K562 (cell line): ENCODE measurements at regions of chr18 and their contacts with region 1.

Region 1: GRCh38 chr18:58776084-58776483 is 88.6 kb upstream of the ZNF532 start:
- DNase-seq: no peak
- ATAC-seq: no peak
- H3K4me3 ChIP-seq: no peak overlapping the region
- H3K27ac ChIP-seq: no peak overlapping the region
- H3K4me1 ChIP-seq: no peaks in the 10 kb centered on the region
- H3K27me3 ChIP-seq: no peaks in the 10 kb centered on the region
- CTCF ChIP-seq: no peak
- EP300 ChIP-seq: no peak
- POLR2A ChIP-seq: no peak
- RAD21 ChIP-seq: no peak

Region 2: GRCh38 chr18:58392324-58393000 is 383.6 kb before region 1 on chr18:
- CTCF ChIA-PET with region 1: no interaction called
- POLR2A ChIA-PET with region 1: no interaction called
- in situ Hi-C with region 1: no loop called
- intact Hi-C with region 1: no loop called
- DNase-seq: no peak
- ATAC-seq: no peak
- H3K4me3 ChIP-seq: no peak overlapping the region
- H3K27ac ChIP-seq: no peak overlapping the region
- H3K4me1 ChIP-seq: no peaks in the 10 kb centered on the region
- H3K27me3 ChIP-seq: no peaks in the 10 kb centered on the region
- CTCF ChIP-seq: no peak
- EP300 ChIP-seq: no peak
- POLR2A ChIP-seq: no peak
- RAD21 ChIP-seq: no peak

Region 3: DNA sequence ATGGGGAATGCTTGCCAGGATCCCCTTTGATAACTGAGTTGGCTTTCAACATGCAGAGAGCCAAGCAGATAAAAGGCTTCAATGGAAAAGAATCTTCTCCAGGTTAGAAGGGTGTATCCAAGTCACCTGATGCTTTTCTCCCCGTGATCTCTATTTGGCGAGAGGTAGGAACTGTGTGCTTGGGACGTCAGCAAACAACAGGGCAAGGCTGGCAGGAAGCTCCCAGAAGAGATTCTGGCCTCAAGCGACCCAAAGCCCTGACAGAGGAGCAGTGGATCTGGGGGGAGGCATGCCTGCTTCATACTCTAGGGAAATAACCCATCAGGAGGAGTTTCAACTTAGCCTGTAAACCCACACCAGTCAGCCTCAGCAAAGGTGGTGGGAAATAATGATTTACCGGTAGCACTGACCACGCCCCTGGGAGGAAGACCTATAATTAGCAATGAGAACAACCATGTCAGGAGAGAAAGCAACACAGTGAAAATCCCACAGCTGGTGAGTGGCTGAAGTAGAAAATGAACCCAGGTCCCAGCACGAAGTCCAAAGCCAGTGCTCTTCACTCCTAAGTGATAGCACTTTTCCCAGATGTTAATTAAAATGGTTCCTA is 287.3 kb after region 1 on chr18:
- CTCF ChIA-PET with region 1: interaction called, 3 read pairs
- POLR2A ChIA-PET with region 1: no interaction called
- in situ Hi-C with region 1: loop called (anchors 5 kb)
- intact Hi-C with region 1: no loop called
- DNase-seq: no peak
- ATAC-seq: no peak
- H3K4me3 ChIP-seq: no peak overlapping the region
- H3K27ac ChIP-seq: no peak overlapping the region
- H3K4me1 ChIP-seq: no peaks in the 10 kb centered on the region
- H3K27me3 ChIP-seq: peaks cover 2 to 23% of the 10 kb centered on the region in 2 experiments; a peak in 2 of 5 replicates
- CTCF ChIP-seq: no peak
- EP300 ChIP-seq: no peak
- POLR2A ChIP-seq: no peak
- RAD21 ChIP-seq: no peak

Region 4: GRCh38 chr18:59070181-59070912 is 294.3 kb after region 1 on chr18:
- CTCF ChIA-PET with region 1: interaction called, 4 read pairs
- POLR2A ChIA-PET with region 1: no interaction called
- in situ Hi-C with region 1: no loop called
- intact Hi-C with region 1: loop called (anchors 5 kb)
- DNase-seq: peak; percentile 47 to 67 (median 54)
- ATAC-seq: peak; percentile 90
- H3K4me3 ChIP-seq: no peak overlapping the region
- H3K27ac ChIP-seq: no peak overlapping the region
- H3K4me1 ChIP-seq: no peaks in the 10 kb centered on the region
- H3K27me3 ChIP-seq: peaks cover 0 to 7% of the 10 kb centered on the region in 2 experiments; a peak in 1 of 5 replicates
- CTCF ChIP-seq: peak; percentile 60 to 68 (median 63)
- EP300 ChIP-seq: no peak
- POLR2A ChIP-seq: no peak
- RAD21 ChIP-seq: peak; percentile 47 to 62

Region 5: GRCh38 chr18:59123588-59124369 is 347.7 kb after region 1 on chr18:
- CTCF ChIA-PET with region 1: no interaction called
- POLR2A ChIA-PET with region 1: no interaction called
- in situ Hi-C with region 1: no loop called
- intact Hi-C with region 1: no loop called
- DNase-seq: no peak
- ATAC-seq: no peak
- H3K4me3 ChIP-seq: no peak overlapping the region
- H3K27ac ChIP-seq: no peak overlapping the region
- H3K4me1 ChIP-seq: no peaks in the 10 kb centered on the region
- H3K27me3 ChIP-seq: peaks cover 0 to 4% of the 10 kb centered on the region in 2 experiments; a peak in 1 of 5 replicates
- CTCF ChIP-seq: no peak
- EP300 ChIP-seq: no peak
- POLR2A ChIP-seq: no peak
- RAD21 ChIP-seq: no peak